ENCODE measurements at regions of chr7 and their contacts with region 1.

Region 1: DNA sequence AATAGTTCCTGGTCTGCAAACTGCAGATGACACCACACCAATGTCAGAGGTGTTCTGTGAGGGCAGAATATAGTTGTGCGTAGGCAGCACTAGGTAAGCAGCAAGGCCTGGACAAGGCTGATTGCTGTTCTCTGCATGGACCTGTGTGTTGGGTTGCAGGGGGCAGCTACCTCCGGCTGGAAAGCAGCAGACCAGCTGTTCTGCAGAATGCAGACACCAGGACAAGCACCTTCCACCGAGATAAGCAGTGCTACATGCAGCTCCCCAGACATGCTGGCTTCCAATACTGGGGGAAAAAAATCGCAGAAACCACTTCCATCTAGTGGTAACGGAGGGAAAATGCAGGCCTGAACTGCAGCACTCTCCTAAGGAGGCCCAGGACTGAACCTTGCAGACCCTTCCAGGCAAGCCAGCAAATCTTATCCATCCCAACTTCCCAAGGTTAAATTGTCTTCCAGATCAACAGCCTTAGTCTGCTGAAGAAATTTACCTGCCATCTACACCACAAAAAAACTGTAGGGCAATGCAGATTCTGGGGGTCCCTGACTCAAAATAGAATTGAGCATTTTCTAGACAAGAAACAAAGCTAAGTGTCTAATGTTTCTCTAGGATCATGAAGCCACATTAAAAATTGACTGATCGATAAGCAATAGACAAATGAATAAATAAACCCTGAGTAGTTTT is 50.5 kb upstream of the COBL start:
- DNase-seq: peak; percentile 62
- H3K4me3 Mint-ChIP-seq: no peak overlapping the region
- H3K27ac Mint-ChIP-seq: no peak overlapping the region
- H3K4me1 Mint-ChIP-seq: peaks cover 5% of the 10 kb centered on the region
- H3K27me3 Mint-ChIP-seq: peaks cover 11% of the 10 kb centered on the region
- CTCF ChIP-seq: peak; percentile 76

Region 2: DNA sequence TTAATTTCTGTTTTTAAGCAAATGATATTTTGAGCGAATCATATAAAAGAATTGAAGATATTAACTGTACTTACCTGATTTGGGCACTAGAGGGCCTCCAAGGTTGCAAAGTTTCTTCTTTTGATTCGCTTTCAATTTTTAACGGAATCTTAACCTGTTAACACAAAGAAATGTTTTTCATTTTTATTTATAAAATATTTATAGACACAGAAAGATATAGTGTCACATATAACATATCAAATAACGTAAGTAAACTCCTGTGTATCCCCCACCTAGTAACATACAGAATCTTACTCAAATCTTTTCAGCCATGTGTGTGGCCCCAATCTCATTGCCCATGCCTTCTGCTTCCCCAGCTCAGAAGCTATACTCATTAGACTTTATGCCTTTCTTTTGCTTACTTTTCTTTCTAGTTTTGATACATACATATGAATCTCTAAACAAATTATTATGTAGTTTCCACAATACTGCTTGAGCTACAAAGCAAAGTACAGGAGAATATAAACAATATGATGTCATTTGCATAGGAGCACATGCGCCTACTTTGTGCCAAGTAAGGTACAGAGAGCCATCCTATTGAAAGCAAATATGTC is 1224.6 kb before region 1 on chr7:
- CTCF ChIA-PET with region 1: no interaction called
- POLR2A ChIA-PET with region 1: no interaction called
- intact Hi-C with region 1: loop called (anchors 5 kb)
- DNase-seq: peak; percentile 53
- H3K4me3 Mint-ChIP-seq: no peak overlapping the region
- H3K27ac Mint-ChIP-seq: no peak overlapping the region
- H3K4me1 Mint-ChIP-seq: no peaks in the 10 kb centered on the region
- H3K27me3 Mint-ChIP-seq: peaks cover 40% of the 10 kb centered on the region
- CTCF ChIP-seq: peak; percentile 51

Region 3: GRCh38 chr7:51209426-51209825 is 157.6 kb before region 1 on chr7:
- CTCF ChIA-PET with region 1: interaction called, 18 read pairs
- POLR2A ChIA-PET with region 1: no interaction called
- intact Hi-C with region 1: no loop called
- DNase-seq: no peak
- H3K4me3 Mint-ChIP-seq: no peak overlapping the region
- H3K27ac Mint-ChIP-seq: no peak overlapping the region
- H3K4me1 Mint-ChIP-seq: peaks cover 6% of the 10 kb centered on the region
- H3K27me3 Mint-ChIP-seq: no peaks in the 10 kb centered on the region
- CTCF ChIP-seq: no peak

Region 4: DNA sequence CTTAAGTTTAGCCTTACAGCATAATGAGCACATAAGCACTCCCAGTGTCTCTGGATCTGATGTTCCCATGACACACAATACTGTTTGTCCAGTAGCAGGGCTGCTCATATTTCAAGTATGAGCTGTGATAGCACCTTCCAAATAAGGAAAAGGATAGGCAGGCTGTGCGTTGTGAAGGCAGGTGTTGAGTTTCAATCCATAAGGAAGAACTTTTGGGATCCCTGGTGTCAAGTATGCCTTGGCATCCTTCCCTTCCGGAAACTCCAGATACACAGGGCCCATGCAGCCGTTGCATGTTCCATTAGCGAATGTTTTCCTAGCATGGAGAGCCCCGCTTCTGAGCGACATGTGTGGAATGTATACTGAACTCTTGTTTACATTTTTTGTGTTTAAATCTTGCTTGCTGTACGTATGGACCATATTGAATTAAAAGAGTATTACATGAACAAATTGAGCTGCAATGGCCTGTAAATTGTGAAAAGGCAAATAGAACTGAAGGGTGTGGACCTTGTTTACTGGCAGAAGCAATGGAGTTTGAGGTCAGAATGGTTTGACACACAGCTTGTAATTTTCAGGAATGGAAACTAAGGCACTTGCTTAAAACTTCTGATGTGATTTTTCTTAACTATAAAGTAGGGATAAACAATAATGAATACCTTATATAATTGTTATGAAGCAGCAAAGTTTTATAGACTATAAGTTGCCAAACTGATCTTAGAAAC is 16.7 kb before region 1 on chr7:
- CTCF ChIA-PET with region 1: interaction called, 116 read pairs
- POLR2A ChIA-PET with region 1: no interaction called
- intact Hi-C with region 1: no loop called
- DNase-seq: peak; percentile 95
- H3K4me3 Mint-ChIP-seq: no peak overlapping the region
- H3K27ac Mint-ChIP-seq: peak overlapping the region; percentile 85
- H3K4me1 Mint-ChIP-seq: peaks cover 9% of the 10 kb centered on the region
- H3K27me3 Mint-ChIP-seq: no peaks in the 10 kb centered on the region
- CTCF ChIP-seq: no peak

Region 5: DNA sequence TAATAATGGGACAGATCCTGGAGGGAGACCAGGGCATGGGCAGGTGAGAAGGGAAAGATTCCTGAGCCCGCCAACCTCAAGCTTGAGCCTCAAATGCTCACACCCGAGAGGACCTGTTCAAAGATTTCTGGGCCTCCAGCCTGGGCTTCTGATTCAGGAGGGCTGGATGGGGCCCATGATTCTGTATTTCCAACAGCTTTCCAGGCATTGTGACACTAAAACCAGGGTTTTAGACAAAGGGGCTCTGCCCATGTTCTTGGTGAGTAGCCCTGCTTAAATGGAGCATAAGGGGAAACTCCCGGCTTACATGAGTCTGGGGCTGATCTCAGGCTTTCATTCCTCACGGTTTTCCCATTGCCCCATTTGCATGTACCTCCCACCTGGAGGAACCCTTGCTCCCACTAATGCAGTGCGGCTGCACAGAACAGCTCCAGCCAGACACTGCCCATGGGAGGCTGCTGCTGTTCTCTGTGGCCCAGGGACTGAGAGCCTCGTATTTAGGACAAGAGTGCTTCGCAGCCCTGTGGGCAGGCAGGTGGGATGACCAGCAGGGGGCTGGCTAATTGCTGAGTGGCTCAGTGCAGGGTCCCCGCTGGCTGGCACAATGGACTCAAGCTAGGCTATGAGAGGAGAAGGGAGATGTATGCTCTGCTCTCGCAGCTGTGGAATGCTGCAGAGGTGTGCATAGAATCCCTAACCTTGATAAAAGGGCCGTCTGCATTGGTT is 84.8 kb after region 1 on chr7:
- CTCF ChIA-PET with region 1: no interaction called
- POLR2A ChIA-PET with region 1: no interaction called
- intact Hi-C with region 1: no loop called
- DNase-seq: no peak
- H3K4me3 Mint-ChIP-seq: no peak overlapping the region
- H3K27ac Mint-ChIP-seq: no peak overlapping the region
- H3K4me1 Mint-ChIP-seq: no peaks in the 10 kb centered on the region
- H3K27me3 Mint-ChIP-seq: peaks cover 28% of the 10 kb centered on the region
- CTCF ChIP-seq: no peak

Region 6: GRCh38 chr7:51706851-51707250 is 339.8 kb after region 1 on chr7:
- CTCF ChIA-PET with region 1: no interaction called
- POLR2A ChIA-PET with region 1: no interaction called
- intact Hi-C with region 1: no loop called
- DNase-seq: no peak
- H3K4me3 Mint-ChIP-seq: no peak overlapping the region
- H3K27ac Mint-ChIP-seq: no peak overlapping the region
- H3K4me1 Mint-ChIP-seq: no peaks in the 10 kb centered on the region
- H3K27me3 Mint-ChIP-seq: peaks cover 63% of the 10 kb centered on the region
- CTCF ChIP-seq: no peak

Measured in MCF 10A (cell line).